ENCODE measurements at regions of chr4 and their contacts with region 1.

Region 1: DNA sequence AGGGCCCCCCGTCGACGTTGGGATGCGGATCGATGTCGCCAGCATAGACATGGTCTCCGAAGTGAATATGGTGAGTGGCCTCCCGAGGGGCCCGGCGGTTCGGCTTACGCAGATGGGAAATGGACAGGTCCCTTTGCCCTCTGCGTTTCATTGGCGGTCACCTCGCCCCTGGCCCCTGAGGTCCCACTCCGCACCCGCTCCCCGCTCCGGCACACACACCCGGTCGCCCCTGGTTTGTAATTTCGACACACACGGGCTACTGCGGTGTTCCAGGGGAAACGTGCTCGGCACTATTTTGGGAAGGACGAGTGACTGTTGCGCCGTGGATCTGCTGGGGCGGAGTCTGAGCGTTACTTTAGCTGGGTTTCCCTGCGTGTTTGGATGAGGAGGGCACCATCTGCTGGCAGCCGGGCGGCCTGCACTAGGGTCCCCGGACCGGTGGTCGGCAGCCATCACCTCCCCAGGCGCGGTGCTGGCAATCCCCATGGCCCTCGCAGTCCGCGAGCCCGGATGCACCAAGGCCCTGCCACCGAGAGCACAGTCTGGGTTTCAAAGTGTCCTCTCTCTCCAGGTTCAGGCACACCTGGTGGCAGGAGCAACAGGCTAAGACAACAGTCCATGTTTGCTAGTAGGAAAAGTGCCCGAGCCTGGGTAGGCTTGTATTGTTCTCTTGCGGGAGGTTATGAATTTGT is 1.2 kb downstream of the GABRB1 start:
- DNase-seq: peak; percentile 58
- H3K4me3 Mint-ChIP-seq: peak overlapping the region; percentile 61
- H3K27ac Mint-ChIP-seq: no peak overlapping the region
- H3K4me1 Mint-ChIP-seq: no peaks in the 10 kb centered on the region
- H3K27me3 Mint-ChIP-seq: peaks cover 13% of the 10 kb centered on the region
- CTCF ChIP-seq: peak; percentile 62

Region 2: GRCh38 chr4:46844325-46844917 is 188.1 kb before region 1 on chr4:
- CTCF ChIA-PET with region 1: no interaction called
- intact Hi-C with region 1: loop called (anchors 2 kb)
- DNase-seq: peak; percentile 53
- H3K4me3 Mint-ChIP-seq: no peak overlapping the region
- H3K27ac Mint-ChIP-seq: no peak overlapping the region
- H3K4me1 Mint-ChIP-seq: no peaks in the 10 kb centered on the region
- H3K27me3 Mint-ChIP-seq: peaks cover 20% of the 10 kb centered on the region
- CTCF ChIP-seq: peak; percentile 59

Region 3: DNA sequence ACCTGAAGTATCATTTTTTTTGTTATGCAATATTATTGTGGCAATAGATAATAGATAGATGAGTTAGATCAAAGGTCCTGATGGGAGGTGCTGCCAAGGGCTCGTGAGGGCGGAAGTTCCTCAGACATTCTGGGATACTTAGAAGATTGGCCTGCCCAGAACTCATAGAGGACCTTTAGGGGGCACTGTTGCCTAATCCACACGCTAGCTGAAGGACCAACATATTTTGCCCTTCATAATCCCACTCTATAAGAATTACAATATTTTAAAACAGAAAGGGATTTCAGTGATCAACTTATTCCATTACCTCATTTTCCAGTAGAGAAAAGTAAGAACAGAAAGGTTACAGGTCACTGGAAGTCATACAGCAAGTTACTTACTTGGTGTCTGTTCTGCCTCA is 100.6 kb before region 1 on chr4:
- CTCF ChIA-PET with region 1: interaction called, 3 read pairs
- intact Hi-C with region 1: loop called (anchors 2 kb)
- DNase-seq: peak; percentile 30
- H3K4me3 Mint-ChIP-seq: no peak overlapping the region
- H3K27ac Mint-ChIP-seq: no peak overlapping the region
- H3K4me1 Mint-ChIP-seq: no peaks in the 10 kb centered on the region
- H3K27me3 Mint-ChIP-seq: no peaks in the 10 kb centered on the region
- CTCF ChIP-seq: no peak